CD4-positive, alpha-beta memory T cell (primary cell): ENCODE measurements at regions of chr16 and their contacts with region 1.

Region 1: DNA sequence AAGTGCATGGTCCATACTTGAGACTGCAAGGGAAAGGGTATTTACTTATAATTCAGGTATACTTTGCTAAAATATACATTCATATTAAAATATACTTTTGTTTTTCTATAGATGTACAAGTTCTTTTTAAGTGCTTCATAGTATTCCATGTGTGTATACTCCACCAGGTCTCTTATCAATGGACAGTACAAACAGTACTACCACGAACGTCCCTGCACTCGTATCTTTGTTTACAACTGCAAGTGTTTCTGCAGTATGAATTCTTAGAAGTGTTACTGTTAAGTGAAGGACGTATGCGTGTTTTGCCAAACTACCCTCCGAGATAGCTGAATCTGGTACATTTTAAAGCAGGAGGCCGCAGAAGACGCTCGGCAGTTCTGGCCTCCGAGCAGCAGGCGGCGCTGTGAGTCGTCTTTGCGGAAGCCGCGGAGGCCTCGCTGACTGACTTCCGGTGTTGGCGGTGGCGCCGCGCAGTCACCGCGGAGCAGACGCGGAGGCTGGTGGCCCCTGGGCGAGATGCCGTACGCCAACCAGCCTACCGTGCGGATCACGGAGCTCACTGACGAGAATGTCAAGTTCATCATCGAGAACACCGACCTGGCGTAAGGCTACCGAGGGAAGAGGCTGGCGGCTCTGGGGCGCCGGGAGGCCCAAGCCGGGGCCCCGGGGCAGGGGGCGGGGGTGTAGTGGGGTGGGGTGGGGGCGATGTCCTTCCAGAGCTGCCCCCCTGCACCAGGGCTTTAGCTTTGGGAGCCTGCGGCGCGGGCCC is at the start of gene POLR2C:
- DNase-seq: peak; percentile 89 to 93 (median 90)
- H3K4me3 ChIP-seq: peak within 1 kb of the TSS; percentile 81 to 87
- H3K4me3 Mint-ChIP-seq: peak within 1 kb of the TSS; percentile 98 to 100 (median 100)
- H3K27ac ChIP-seq: peak within 1 kb of the TSS; percentile 69
- H3K27ac Mint-ChIP-seq: peak within 1 kb of the TSS; percentile 96 to 100 (median 99)
- H3K4me1 ChIP-seq: peaks cover 36% of the 10 kb centered on the region
- H3K4me1 Mint-ChIP-seq: peaks cover 16 to 43% (median 34%) of the 10 kb centered on the region in 4 donors
- H3K27me3 ChIP-seq: no peaks in the 10 kb centered on the region
- H3K27me3 Mint-ChIP-seq: no peaks in the 10 kb centered on the region
- total RNA-seq, gene POLR2C: 71.4 to 78.1 TPM

Region 2: GRCh38 chr16:57475711-57476339 is 13.4 kb after region 1 on chr16:
- CTCF ChIA-PET with region 1: interaction called, 7 read pairs
- POLR2A ChIA-PET with region 1: interaction called, 16 read pairs
- intact Hi-C with region 1: no loop called
- DNase-seq: peak; percentile 66 to 82 (median 75)
- H3K4me3 ChIP-seq: no peak overlapping the region
- H3K4me3 Mint-ChIP-seq: peak overlapping the region in 5 of 8 donors; percentile 5 to 69 (median 59)
- H3K27ac ChIP-seq: no peak overlapping the region
- H3K27ac Mint-ChIP-seq: peak overlapping the region in 4 of 7 donors; percentile 74 to 79 (median 76)
- H3K4me1 ChIP-seq: peaks cover 17% of the 10 kb centered on the region
- H3K4me1 Mint-ChIP-seq: peaks cover 7 to 12% (median 10%) of the 10 kb centered on the region in 4 donors
- H3K27me3 ChIP-seq: no peaks in the 10 kb centered on the region
- H3K27me3 Mint-ChIP-seq: no peaks in the 10 kb centered on the region

Region 3: DNA sequence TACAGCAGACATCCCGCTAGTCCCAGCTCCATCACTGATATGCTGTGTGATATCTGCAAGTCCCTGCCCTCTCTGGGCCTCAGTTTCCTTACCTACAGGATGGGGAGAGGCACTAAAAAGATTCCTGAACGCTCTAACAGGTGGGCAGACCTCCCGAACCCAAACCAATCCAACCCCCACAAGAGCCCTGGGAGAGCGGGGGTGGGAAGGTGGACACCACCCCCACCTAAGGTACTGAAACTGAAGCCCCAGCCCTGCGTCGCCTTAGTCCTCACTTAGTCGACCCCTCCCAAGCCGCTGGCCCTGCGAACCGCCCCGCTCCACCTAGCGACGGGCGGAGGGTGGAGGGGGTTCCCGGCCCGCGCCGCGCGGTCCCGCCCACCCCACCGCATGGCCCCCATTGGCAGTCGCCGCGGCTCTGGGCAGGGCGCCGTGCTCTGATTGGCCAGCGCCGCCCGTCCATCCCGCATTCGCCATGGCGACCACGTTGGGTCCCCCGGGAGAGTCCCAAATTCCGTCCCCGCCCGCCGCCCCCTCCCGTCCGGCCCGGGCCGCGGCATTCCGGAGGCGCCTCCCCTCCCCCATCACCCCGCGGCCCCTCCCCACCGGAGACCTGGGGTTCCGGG is 73.4 kb after region 1 on chr16:
- CTCF ChIA-PET with region 1: interaction called, 7 read pairs
- POLR2A ChIA-PET with region 1: interaction called, 10 read pairs
- intact Hi-C with region 1: loop called (anchors 2 kb)
- DNase-seq: peak; percentile 89 to 95 (median 93)
- H3K4me3 ChIP-seq: peak overlapping the region in 1 of 2 donors; percentile 51
- H3K4me3 Mint-ChIP-seq: peak overlapping the region; percentile 80 to 91 (median 83)
- H3K27ac ChIP-seq: peak overlapping the region; percentile 92
- H3K27ac Mint-ChIP-seq: peak overlapping the region; percentile 96 to 99 (median 98)
- H3K4me1 ChIP-seq: peaks cover 76% of the 10 kb centered on the region
- H3K4me1 Mint-ChIP-seq: peaks cover 60 to 76% (median 69%) of the 10 kb centered on the region in 4 donors
- H3K27me3 ChIP-seq: no peaks in the 10 kb centered on the region
- H3K27me3 Mint-ChIP-seq: no peaks in the 10 kb centered on the region

Region 4: GRCh38 chr16:57920215-57920879 is 458.0 kb after region 1 on chr16:
- CTCF ChIA-PET with region 1: no interaction called
- POLR2A ChIA-PET with region 1: no interaction called
- intact Hi-C with region 1: no loop called
- DNase-seq: no peak
- H3K4me3 ChIP-seq: no peak overlapping the region
- H3K4me3 Mint-ChIP-seq: no peak overlapping the region
- H3K27ac ChIP-seq: no peak overlapping the region
- H3K27ac Mint-ChIP-seq: no peak overlapping the region
- H3K4me1 ChIP-seq: no peaks in the 10 kb centered on the region
- H3K4me1 Mint-ChIP-seq: no peaks in the 10 kb centered on the region
- H3K27me3 ChIP-seq: no peaks in the 10 kb centered on the region
- H3K27me3 Mint-ChIP-seq: peaks cover 0 to 2% of the 10 kb centered on the region in 2 donors

Region 5: GRCh38 chr16:58137581-58137980 is 675.2 kb after region 1 on chr16:
- CTCF ChIA-PET with region 1: no interaction called
- POLR2A ChIA-PET with region 1: no interaction called
- intact Hi-C with region 1: no loop called
- DNase-seq: no peak
- H3K4me3 ChIP-seq: no peak overlapping the region
- H3K4me3 Mint-ChIP-seq: no peak overlapping the region
- H3K27ac ChIP-seq: no peak overlapping the region
- H3K27ac Mint-ChIP-seq: peak overlapping the region in 1 of 7 donors; percentile 61
- H3K4me1 ChIP-seq: no peaks in the 10 kb centered on the region
- H3K4me1 Mint-ChIP-seq: no peaks in the 10 kb centered on the region
- H3K27me3 ChIP-seq: no peaks in the 10 kb centered on the region
- H3K27me3 Mint-ChIP-seq: no peaks in the 10 kb centered on the region